GM10248 (cell line): ENCODE measurements at regions of chr11 and their contacts with region 1.

Region 1: GRCh38 chr11:1652771-1653540 is 23.4 kb downstream of the KRTAP5-5 start:
- DNase-seq: peak; percentile 90
- CTCF ChIP-seq: peak; percentile 97

Region 2: DNA sequence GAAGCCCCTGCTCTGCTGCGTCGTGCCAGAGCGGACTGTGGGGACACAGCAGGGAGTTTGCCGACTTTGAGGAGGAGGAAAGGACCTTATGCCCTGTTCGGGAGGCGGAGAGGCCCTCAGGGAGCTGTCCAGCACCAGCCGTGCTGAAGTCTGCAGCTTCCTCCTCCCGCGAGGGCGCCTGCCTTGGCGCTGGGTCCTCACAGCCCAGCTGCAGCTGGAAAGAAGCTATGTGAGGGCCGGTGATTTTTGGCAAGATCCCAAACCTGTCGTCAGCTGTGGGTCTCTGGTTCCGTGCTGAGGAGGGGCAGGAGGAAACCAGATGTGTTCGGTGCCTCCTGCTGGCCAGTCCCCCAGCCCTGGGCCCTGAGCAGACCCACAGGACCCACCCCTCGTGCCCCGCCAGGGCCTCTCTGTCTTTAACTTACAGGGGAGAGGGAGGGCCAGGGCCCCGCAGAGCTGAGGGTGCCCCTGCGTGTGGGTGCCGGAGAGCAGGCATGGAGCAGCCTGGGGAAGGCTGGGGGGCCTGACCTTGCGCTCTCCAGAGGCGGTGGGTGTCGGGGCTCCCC is 251.2 kb before region 1 on chr11:
- CTCF ChIA-PET with region 1: no interaction called
- POLR2A ChIA-PET with region 1: no interaction called
- DNase-seq: peak; percentile 77
- CTCF ChIP-seq: no peak

Region 3: DNA sequence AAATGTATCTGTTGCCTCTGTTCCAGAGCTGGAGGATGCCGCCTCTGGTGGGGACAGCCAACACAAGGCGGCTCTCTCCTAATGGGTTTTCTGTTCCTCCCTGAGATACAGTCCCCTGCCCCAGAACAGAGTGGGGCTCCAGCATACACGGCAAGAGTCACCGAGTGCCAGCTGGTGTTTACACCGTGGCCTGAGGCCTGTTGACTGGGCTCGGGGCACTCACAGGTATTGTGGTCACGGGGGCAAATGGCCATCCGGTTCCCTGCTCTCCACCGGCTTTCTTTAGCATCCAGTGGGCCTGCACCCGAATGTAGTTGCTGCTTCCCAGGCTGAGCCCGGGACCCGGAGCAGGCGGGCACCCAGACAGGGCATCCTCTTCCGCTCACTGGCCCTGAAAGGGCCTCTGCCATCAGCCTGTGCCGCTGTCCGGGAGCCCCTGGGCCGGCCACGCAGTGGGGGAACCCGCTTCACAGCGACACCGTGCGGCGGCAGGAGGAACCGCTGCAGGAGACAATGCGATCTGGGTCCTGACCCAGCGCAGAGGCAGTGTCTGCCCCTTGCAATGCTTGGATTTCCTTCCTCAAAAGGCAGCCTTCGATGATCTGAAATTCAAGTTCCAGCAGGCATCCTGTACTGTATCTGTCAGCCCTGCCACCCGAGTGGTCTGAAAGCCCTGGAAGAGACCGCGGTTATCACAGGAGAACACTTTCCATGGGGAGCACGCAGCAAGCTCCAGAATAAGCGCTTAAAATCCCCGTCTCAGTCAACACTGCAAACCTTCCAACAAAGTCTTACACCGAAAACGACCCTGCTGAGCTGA is 24.2 kb before region 1 on chr11:
- CTCF ChIA-PET with region 1: interaction called, 30 read pairs
- POLR2A ChIA-PET with region 1: no interaction called
- DNase-seq: peak; percentile 86
- CTCF ChIP-seq: peak; percentile 86

Region 4: GRCh38 chr11:1633864-1634263 is 19.1 kb before region 1 on chr11:
- CTCF ChIA-PET with region 1: interaction called, 62 read pairs
- POLR2A ChIA-PET with region 1: no interaction called
- DNase-seq: no peak
- CTCF ChIP-seq: no peak

Region 5: DNA sequence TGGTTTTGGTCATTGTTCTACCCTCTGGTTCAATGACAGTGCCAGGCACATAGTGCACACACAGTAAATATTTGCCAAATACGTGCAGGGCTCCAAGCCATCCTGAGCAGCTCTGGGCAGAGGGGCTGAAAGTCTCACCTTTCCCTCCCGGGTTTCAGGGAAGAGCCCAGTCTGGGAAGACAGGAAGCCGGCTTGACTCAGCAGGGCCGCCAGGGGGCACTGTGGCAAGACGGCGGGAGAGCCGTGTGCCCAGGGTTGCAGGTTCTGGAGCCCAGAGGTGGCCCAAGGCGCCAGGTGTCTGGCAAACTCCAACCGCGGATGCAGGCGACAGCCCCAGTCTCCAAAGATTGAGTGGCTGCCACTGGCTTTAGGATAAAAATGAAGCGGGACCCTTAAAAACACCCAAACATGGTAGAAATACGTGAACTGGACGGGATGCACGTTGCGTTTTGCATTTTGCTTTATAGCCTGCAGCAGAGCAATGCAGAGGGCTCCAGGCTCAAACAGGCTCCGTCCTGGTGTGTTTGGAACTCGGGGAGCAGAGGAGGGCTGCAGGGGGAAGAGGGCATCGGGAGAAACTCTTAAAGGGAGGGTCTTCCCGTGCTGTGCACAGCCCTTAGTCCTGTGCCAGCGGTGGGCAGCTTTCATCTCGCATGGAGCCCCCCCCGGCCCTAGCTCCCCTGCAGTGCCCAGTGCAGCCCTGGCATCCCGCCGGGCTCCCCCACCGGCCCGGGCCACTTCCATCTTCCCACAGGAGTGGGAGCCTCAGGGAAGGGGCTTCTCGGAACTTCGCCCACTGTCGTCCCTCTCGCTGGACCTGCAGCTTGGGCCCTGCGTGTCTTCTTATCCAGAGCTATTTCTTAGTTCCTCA is 12.6 kb before region 1 on chr11:
- CTCF ChIA-PET with region 1: interaction called, 62 read pairs
- POLR2A ChIA-PET with region 1: no interaction called
- DNase-seq: peak; percentile 67
- CTCF ChIP-seq: peak; percentile 68

Region 6: DNA sequence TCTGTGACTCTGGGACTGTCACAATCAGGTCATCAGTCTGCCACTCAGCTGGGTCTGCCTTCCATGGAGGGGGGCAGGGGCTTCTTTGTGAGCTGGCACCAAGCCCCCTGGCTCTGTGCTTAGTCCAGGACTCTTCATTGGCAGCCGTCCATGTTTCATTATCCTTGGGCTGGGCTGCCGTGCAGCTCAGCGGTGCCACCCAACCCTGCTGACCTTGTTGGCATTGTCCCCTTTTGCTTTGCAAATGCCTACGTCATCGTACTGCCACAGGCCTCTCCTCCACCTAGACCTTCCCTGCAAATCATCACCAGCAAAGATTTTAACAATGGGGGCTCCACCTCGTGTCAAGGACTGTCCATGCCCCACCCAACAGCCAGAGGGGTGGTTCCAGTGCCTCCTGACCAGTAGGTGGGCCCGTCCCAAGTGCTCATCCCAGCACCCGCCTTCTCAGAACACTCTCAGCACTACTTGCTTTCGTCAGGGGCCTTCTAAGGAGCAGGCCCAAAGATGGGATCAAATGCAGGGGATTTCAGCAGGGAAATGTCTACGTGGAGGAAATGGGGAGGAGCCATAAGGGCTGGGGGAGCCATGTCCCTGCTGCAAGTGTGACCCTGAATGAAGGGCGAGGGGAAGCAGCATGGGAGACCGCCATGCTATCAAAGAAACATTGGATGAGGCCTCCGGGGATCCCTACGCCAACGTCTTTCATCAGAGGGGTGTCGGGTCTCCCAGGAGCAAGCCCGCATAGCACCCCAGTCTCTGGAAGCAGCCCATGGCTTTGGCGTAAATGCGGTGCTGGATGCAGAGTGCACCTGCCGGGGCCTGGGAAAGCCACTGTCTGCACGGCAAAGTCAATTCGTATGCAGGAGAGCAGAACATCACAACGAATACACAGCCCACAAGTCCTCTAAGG is 62.3 kb after region 1 on chr11:
- CTCF ChIA-PET with region 1: no interaction called
- POLR2A ChIA-PET with region 1: no interaction called
- DNase-seq: no peak
- CTCF ChIP-seq: no peak

Region 7: DNA sequence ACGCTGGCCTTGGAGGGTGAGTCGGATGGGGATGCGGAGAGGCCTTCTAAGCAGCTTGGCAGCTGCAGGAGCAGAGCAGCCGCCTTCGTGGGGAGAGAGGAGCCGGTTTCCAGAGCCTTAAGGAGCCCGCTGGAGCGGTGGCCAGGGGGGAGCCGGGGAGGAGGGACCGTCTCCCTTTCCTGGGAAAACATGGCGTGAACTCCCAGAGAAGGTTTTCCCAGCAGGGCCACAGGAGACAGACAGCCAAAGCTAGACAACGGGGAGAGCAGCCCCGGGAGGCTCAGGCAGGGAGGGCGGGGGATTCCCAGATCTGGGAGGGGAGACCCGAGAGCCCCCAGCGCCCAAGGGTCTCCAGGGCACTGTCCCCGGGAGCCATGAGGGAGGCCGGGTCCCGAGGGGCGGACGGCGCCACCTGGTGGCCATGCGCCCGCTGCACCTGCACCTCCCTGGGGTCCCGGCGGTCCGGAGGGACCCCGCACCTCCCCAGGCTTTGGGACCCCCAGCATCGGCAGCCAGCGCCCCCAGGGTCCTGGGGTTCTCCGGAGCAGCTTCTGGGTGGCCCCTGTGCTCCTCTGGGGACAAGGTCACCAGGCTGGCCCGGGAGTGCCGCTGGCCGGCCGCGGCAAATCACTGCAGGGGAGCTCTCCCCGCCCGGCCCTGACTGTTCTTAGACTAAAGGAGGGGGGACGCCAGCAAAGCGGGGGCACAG is 179.4 kb after region 1 on chr11:
- CTCF ChIA-PET with region 1: interaction called, 107 read pairs
- POLR2A ChIA-PET with region 1: no interaction called
- DNase-seq: peak; percentile 87
- CTCF ChIP-seq: peak; percentile 83

Region 8: DNA sequence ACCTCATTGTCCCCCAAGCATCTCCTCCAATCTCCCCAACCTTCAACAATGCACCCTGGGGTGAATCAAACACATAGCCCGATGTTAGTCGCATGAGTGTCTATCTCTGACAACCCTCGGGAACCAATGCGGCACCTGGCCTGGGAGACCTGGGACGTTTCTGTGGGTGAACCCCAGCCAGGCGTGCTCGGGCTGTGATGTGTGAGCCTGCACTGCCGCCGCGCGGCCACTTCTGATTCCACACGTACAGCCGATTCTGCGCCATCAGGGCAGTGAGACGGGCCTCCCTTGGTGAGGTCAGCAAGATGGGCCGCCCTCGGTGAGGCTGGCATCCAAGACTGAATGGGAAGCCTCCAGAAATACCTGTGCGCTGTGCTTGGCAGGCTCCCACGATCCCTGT is 349.9 kb after region 1 on chr11:
- CTCF ChIA-PET with region 1: interaction called, 33 read pairs
- POLR2A ChIA-PET with region 1: no interaction called
- DNase-seq: no peak
- CTCF ChIP-seq: no peak